AG04449 (cell line): ENCODE measurements at regions of chr10 and their contacts with region 1.

Region 1: DNA sequence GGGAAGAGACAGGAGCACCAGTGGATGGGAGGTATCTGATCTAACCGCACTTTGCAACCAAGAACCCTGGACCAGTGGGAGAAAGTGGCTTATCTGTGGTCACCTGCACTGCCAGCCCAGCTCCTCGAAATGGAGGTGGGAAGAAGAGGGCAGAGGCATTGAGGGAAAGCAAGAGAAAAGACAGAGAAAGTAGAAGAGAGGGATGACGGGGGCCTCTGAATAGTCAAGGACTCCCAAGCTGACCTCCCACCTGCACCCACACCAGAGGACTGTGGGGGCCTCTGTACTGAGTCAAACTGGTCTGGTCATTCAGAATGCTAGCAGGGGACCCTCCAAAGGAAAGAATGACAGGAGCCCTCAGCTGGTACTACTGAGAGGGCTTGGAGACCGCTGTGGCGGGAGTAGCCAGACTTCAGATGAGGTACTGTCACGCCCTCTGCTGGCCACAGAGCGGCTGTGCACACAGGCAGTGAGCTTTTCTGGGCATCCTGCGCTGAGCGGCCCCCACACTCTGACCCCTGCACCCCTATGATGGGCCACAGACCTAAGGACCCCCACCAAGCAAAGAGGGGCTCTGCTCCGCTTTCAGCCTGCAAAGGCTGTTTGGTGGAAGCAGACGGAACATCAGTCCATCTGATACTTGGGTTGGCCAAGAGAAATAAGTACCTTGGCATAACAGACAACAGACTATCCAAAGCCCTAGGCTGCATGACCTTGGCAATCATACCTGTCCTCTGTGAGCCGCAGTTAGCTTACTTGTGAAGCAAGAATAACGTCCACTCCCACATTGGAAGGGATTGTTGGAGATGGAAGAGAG is 112.9 kb downstream of the COL13A1 start:
- DNase-seq: no peak
- H3K4me3 ChIP-seq: no peak overlapping the region
- CTCF ChIP-seq: peak; percentile 96

Region 2: DNA sequence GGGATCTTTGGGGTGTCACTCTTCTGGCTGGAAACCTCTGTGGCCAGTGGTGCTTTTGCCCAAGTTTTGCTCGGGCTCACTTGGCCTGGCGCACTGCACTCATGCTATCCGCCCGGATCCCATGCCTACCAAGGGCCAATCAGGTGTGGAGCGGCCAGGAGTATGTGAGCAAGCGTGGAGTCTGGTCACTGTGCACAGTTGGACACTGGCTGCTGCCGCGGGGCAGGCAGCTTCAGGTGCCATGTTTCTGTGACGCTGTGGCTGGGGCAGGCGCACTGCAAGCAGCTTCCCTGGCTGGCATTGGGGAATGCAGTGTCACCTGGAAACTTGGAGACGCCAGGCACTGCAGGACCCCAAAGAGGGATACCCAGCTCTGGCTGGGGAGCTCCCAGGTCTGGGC is 386.6 kb before region 1 on chr10:
- CTCF ChIA-PET with region 1: no interaction called
- POLR2A ChIA-PET with region 1: no interaction called
- DNase-seq: no peak
- H3K4me3 ChIP-seq: no peak overlapping the region
- CTCF ChIP-seq: no peak

Region 3: GRCh38 chr10:69728335-69728870 is 186.2 kb before region 1 on chr10:
- CTCF ChIA-PET with region 1: interaction called, 10 read pairs
- POLR2A ChIA-PET with region 1: no interaction called
- DNase-seq: no peak
- H3K4me3 ChIP-seq: no peak overlapping the region
- CTCF ChIP-seq: no peak

Region 4: DNA sequence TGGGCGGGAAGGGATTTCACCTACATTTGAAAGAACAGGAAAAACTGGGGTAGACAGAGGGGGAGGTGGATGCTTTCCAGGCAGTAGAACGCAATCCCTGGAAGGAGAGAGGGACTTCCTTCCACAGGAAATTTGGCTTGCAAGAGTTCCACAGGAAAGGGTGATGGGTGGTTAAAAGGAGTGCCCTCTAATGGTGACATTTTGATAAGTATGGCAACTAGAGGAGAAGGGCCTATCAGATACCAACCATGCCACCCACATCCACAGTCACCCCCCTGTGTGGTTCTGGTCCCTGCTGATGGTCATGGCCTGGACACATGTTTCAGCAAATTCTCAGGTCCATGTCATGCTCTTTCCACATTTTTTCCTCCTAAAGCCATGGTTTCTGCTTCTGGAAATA is 140.0 kb before region 1 on chr10:
- CTCF ChIA-PET with region 1: interaction called, 638 read pairs
- POLR2A ChIA-PET with region 1: no interaction called
- DNase-seq: no peak
- H3K4me3 ChIP-seq: no peak overlapping the region
- CTCF ChIP-seq: no peak

Region 5: DNA sequence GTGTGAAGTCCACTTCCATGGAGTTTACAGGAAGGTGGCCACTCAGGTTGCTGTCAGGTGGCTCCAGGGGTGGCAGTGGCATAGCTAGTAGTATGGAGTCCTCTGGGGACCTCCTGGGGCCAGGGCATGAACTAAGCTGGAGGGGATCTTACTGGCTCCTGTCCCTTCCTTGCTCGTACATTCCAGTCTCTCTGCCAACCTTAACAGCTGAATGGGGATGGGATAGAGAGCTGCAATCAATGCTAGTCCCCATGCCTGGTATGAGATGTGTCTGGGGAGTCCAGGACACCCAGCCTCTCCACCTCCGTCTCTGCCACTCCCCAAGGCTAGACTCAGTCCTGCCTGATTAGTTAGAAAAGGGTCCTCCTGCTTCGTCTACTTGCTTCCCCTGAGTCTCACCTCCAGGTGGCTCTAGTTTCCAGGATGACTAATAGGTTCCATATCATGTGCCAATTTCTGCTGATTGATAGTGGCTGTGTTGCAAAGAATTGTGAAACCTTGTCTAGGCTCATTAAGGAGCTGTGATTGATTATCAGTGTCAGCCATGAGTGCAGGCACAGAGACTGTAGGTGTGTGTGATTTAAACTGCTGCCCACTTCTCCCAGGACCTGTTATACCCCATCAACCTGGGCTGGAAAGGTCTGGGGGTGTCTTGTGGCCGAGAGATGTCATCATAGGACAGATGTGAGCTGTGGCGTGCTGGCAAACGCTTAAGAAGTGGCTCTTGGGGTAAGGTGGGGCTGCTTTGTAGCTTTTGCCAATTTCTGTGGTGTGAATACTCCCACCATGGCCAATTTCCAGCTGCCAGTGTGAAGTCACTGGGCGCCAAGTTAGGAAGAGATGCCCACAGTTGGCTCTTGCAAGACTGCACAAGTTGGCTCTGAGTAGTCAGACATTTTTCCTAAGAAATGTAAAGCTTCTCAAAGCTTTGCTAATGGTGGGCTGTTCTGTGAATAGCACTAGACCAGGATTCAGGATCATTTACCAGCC is 53.1 kb before region 1 on chr10:
- CTCF ChIA-PET with region 1: interaction called, 15 read pairs
- POLR2A ChIA-PET with region 1: no interaction called
- DNase-seq: no peak
- H3K4me3 ChIP-seq: no peak overlapping the region
- CTCF ChIP-seq: peak; percentile 36

Region 6: GRCh38 chr10:69885379-69886013 is 29.1 kb before region 1 on chr10:
- CTCF ChIA-PET with region 1: interaction called, 218 read pairs
- POLR2A ChIA-PET with region 1: no interaction called
- DNase-seq: no peak
- H3K4me3 ChIP-seq: no peak overlapping the region
- CTCF ChIP-seq: peak; percentile 19

Region 7: DNA sequence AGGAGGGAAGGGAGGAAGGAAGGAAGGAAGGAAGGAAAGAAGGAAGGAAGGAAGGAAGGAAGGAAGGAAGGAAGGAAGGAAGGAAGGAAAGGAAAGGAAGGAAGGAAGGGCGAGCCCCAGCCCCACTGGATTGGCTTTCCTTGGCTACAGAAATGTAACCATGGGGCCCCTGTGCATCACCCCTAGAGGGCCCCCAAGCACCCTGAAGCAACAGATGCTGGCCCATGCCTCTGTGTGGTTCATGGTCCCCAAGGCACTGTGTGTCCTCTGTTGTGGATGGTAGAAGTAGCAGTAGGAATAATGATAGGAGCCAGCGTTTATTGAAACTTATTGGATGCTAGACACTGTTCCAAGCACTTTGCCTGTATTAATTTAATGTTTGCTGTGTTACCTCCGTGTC is 21.5 kb after region 1 on chr10:
- CTCF ChIA-PET with region 1: interaction called, 23 read pairs
- POLR2A ChIA-PET with region 1: no interaction called
- DNase-seq: no peak
- H3K4me3 ChIP-seq: no peak overlapping the region
- CTCF ChIP-seq: peak; percentile 3